A549 (cell line): ENCODE measurements at regions of chr7 and their contacts with region 1.

Region 1: GRCh38 chr7:2451171-2452073 is 24.8 kb downstream of the GRIFIN start:
- DNase-seq: peak; percentile 83 to 94
- ATAC-seq: peak; percentile 94 to 98
- H3K4me3 ChIP-seq: peak overlapping the region; percentile 39
- H3K27ac ChIP-seq: peak overlapping the region; percentile 84 to 88
- H3K4me1 ChIP-seq: peaks cover 11% of the 10 kb centered on the region
- CTCF ChIP-seq: peak; percentile 85
- EP300 ChIP-seq: no peak
- POLR2A ChIP-seq: no peak
- RAD21 ChIP-seq: peak; percentile 96 to 97

Region 2: GRCh38 chr7:1800902-1801301 is 650.5 kb before region 1 on chr7:
- CTCF ChIA-PET with region 1: no interaction called
- POLR2A ChIA-PET with region 1: no interaction called
- DNase-seq: no peak
- ATAC-seq: no peak
- H3K4me3 ChIP-seq: no peak overlapping the region
- H3K27ac ChIP-seq: no peak overlapping the region
- H3K4me1 ChIP-seq: no peaks in the 10 kb centered on the region
- CTCF ChIP-seq: no peak
- EP300 ChIP-seq: no peak
- POLR2A ChIP-seq: no peak
- RAD21 ChIP-seq: no peak

Region 3: GRCh38 chr7:2440608-2441245 is 10.7 kb before region 1 on chr7:
- CTCF ChIA-PET with region 1: interaction called, 39 read pairs
- POLR2A ChIA-PET with region 1: no interaction called
- DNase-seq: no peak
- ATAC-seq: no peak
- H3K4me3 ChIP-seq: no peak overlapping the region
- H3K27ac ChIP-seq: no peak overlapping the region
- H3K4me1 ChIP-seq: no peaks in the 10 kb centered on the region
- CTCF ChIP-seq: no peak
- EP300 ChIP-seq: no peak
- POLR2A ChIP-seq: no peak
- RAD21 ChIP-seq: no peak

Region 4: GRCh38 chr7:2477447-2478398 is 26.3 kb after region 1 on chr7:
- CTCF ChIA-PET with region 1: interaction called, 11 read pairs
- POLR2A ChIA-PET with region 1: no interaction called
- DNase-seq: peak; percentile 53 to 93
- ATAC-seq: peak; percentile 86 to 97
- H3K4me3 ChIP-seq: no peak overlapping the region
- H3K27ac ChIP-seq: peak overlapping the region; percentile 31 to 76; a peak in 4 of 6 replicates
- H3K4me1 ChIP-seq: peaks cover 10% of the 10 kb centered on the region; the same call in 1 of the 3 replicates
- CTCF ChIP-seq: peak; percentile 80
- EP300 ChIP-seq: no peak
- POLR2A ChIP-seq: no peak
- RAD21 ChIP-seq: peak; percentile 87 to 91

Region 5: DNA sequence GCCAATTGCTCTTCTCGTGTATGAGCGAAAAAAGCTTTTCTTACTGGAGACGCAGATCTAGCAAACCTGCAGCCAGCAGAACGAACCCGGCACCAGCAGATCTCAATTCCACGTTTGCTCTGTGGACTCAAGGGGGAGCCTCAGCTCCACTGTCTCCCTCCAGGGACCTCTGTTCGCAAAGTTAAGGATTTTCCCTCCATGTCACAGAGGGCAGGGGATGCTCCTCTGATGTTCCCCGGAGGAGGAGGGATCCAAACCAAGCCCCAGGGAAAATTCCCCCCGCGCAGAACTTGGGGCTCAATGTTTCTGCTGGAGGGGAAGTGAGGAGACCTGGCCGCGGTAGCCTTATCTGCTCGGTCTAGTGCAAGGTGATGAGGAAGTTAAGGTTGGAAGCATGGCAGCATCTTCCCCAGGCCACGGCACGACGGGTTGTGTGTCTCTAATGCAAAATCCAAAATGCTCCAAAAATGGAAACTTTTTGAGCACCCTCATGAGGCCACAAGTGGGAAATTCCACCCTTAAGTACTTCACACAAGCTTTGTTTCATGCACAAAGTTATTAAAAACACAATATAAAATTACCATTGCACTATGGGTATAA is 116.4 kb after region 1 on chr7:
- CTCF ChIA-PET with region 1: interaction called, 14 read pairs
- POLR2A ChIA-PET with region 1: no interaction called
- DNase-seq: no peak
- ATAC-seq: peak; percentile 45 to 78; a peak in 3 of 6 replicates
- H3K4me3 ChIP-seq: no peak overlapping the region
- H3K27ac ChIP-seq: no peak overlapping the region
- H3K4me1 ChIP-seq: peaks cover 13% of the 10 kb centered on the region
- CTCF ChIP-seq: peak; percentile 17; the same call in 2 of the 3 replicates
- EP300 ChIP-seq: no peak
- POLR2A ChIP-seq: no peak
- RAD21 ChIP-seq: peak; percentile 43 to 67; a peak in 4 of 5 replicates

Region 6: DNA sequence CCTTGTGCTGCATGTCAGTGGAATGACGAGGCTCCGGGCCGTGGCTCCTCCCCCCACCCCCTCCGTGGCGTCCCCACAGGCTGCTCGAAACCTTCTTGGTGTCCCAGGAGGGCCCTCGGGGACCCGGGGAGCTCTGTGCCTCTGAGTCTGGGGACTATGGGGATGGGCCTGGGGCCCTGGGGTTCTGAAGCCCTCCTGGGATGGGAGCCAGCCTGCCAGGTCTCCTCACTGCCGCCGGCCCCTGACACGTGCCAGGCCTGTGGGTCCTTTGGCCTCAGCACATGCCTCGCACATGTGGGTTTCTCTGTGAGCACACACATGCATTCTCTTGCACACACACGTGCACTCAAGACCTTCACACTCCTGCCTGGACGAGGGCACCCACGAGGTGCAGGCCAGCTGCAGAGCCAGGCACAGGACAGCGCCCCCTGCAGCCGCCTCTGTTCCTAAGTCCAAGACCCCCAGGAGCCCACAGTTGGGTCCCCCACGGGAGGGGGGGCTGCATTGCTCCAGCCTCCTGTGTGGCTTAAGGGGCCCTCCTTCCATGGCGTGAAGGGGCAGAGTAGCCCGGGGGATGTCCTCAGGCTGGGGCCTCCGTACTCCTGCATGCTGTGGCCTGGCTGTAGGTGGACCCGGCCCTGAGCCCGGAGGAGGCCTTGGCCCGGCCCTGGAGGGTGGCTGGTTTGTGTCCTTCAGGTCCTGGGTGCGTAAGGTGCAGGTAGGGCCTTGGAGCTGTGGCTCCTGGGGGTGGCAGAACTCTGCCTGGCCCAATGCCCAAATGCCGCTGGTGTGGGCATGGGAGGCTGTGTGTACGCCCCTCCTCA is 209.4 kb after region 1 on chr7:
- CTCF ChIA-PET with region 1: interaction called, 15 read pairs
- POLR2A ChIA-PET with region 1: no interaction called
- DNase-seq: no peak
- ATAC-seq: peak in 1 of 2 experiments; percentile 11; a peak in 3 of 6 replicates
- H3K4me3 ChIP-seq: no peak overlapping the region
- H3K27ac ChIP-seq: no peak overlapping the region
- H3K4me1 ChIP-seq: no peaks in the 10 kb centered on the region
- CTCF ChIP-seq: peak; percentile 30; the same call in 1 of the 3 replicates
- EP300 ChIP-seq: no peak
- POLR2A ChIP-seq: no peak
- RAD21 ChIP-seq: no peak

Region 7: GRCh38 chr7:2680792-2681490 is 229.5 kb after region 1 on chr7:
- CTCF ChIA-PET with region 1: interaction called, 76 read pairs
- POLR2A ChIA-PET with region 1: no interaction called
- DNase-seq: peak; percentile 77 to 93
- ATAC-seq: peak; percentile 82 to 94
- H3K4me3 ChIP-seq: no peak overlapping the region
- H3K27ac ChIP-seq: no peak overlapping the region
- H3K4me1 ChIP-seq: no peaks in the 10 kb centered on the region
- CTCF ChIP-seq: peak; percentile 79
- EP300 ChIP-seq: no peak
- POLR2A ChIP-seq: no peak
- RAD21 ChIP-seq: peak; percentile 83 to 88

Region 8: GRCh38 chr7:2709553-2710285 is 258.3 kb after region 1 on chr7:
- CTCF ChIA-PET with region 1: interaction called, 30 read pairs
- POLR2A ChIA-PET with region 1: no interaction called
- DNase-seq: peak; percentile 73 to 74
- ATAC-seq: peak; percentile 83 to 95
- H3K4me3 ChIP-seq: no peak overlapping the region
- H3K27ac ChIP-seq: 0 out of 6 replicates have a peak overlapping the region, but pooled peaks of 1 of the 2 experiments have one; percentile 3
- H3K4me1 ChIP-seq: no peaks in the 10 kb centered on the region
- CTCF ChIP-seq: peak; percentile 80
- EP300 ChIP-seq: no peak
- POLR2A ChIP-seq: no peak
- RAD21 ChIP-seq: peak; percentile 79 to 80